Panc1 (cell line): ENCODE measurements at regions of chr1 and their contacts with region 1.

Region 1: GRCh38 chr1:20913242-20913641 is 126.1 kb upstream of the HP1BP3 start:
- DNase-seq: no peak
- ATAC-seq: no peak
- H3K4me3 ChIP-seq: no peak overlapping the region
- H3K27ac ChIP-seq: no peak overlapping the region
- H3K4me1 ChIP-seq: no peaks in the 10 kb centered on the region
- H3K27me3 ChIP-seq: no peaks in the 10 kb centered on the region
- CTCF ChIP-seq: no peak

Region 2: GRCh38 chr1:21801100-21801499 is 887.9 kb after region 1 on chr1:
- CTCF ChIA-PET with region 1: no interaction called
- POLR2A ChIA-PET with region 1: interaction called, 21 read pairs
- in situ Hi-C with region 1: no loop called
- intact Hi-C with region 1: no loop called
- DNase-seq: peak; percentile 48
- ATAC-seq: peak; percentile 66; the same call in 1 of the 2 replicates
- H3K4me3 ChIP-seq: no peak overlapping the region
- H3K27ac ChIP-seq: no peak overlapping the region
- H3K4me1 ChIP-seq: no peaks in the 10 kb centered on the region
- H3K27me3 ChIP-seq: no peaks in the 10 kb centered on the region
- CTCF ChIP-seq: no peak